ENCODE measurements at regions of chr10 and their contacts with region 1.

Region 1: DNA sequence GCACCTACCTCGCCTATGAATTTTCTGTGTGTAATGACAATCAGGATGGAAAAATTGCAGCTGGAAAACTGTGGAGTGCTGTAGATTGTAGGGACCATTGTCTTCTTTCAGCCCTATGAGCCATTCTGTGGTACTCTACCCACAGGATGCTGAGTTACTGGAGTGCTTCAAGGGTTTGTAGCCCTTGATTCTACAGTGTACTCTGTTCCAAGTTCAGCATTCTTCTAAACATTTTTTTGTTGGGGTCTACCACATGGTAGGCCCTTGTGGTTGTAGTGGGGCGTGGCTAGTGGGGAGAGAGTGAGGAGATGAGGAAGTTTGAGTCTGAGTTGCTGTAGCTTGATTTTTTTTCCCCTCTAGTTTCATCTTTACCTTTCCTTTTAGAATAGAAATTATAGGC is 33.5 kb downstream of the REEP3 start:
- DNase-seq: no peak
- ATAC-seq: peak; percentile 66
- H3K4me3 ChIP-seq: no peak overlapping the region
- H3K27ac ChIP-seq: peak overlapping the region; percentile 88
- H3K4me1 ChIP-seq: peaks cover 54% of the 10 kb centered on the region
- H3K27me3 ChIP-seq: no peaks in the 10 kb centered on the region
- CTCF ChIP-seq: no peak

Region 2: GRCh38 chr10:63128443-63128842 is 426.2 kb before region 1 on chr10:
- CTCF ChIA-PET with region 1: no interaction called
- POLR2A ChIA-PET with region 1: interaction called, 11 read pairs
- in situ Hi-C with region 1: no loop called
- intact Hi-C with region 1: no loop called
- DNase-seq: no peak
- ATAC-seq: no peak
- H3K4me3 ChIP-seq: no peak overlapping the region
- H3K27ac ChIP-seq: no peak overlapping the region
- H3K4me1 ChIP-seq: no peaks in the 10 kb centered on the region
- H3K27me3 ChIP-seq: no peaks in the 10 kb centered on the region
- CTCF ChIP-seq: no peak

Region 3: GRCh38 chr10:63588436-63589167 is 33.9 kb after region 1 on chr10:
- CTCF ChIA-PET with region 1: no interaction called
- POLR2A ChIA-PET with region 1: no interaction called
- in situ Hi-C with region 1: no loop called
- intact Hi-C with region 1: no loop called
- DNase-seq: peak; percentile 7
- ATAC-seq: no peak
- H3K4me3 ChIP-seq: no peak overlapping the region
- H3K27ac ChIP-seq: no peak overlapping the region
- H3K4me1 ChIP-seq: peaks cover 6% of the 10 kb centered on the region
- H3K27me3 ChIP-seq: no peaks in the 10 kb centered on the region
- CTCF ChIP-seq: no peak